Activated T-helper 1 cell treated with anti-CD3 and anti-CD28 coated beads, Interleukin-12 subunit alpha, Interleukin-12 subunit beta, Interleukin-2, Interleukin-4 antibody, amounts not matched to agents 30 ng/mL and 10 ng/mL and 1 ng/mL, durations not matched to agents 14 hours and 24 hours and 36 hours (primary cell): ENCODE measurements at regions of chr11 and their contacts with region 1.

Region 1: DNA sequence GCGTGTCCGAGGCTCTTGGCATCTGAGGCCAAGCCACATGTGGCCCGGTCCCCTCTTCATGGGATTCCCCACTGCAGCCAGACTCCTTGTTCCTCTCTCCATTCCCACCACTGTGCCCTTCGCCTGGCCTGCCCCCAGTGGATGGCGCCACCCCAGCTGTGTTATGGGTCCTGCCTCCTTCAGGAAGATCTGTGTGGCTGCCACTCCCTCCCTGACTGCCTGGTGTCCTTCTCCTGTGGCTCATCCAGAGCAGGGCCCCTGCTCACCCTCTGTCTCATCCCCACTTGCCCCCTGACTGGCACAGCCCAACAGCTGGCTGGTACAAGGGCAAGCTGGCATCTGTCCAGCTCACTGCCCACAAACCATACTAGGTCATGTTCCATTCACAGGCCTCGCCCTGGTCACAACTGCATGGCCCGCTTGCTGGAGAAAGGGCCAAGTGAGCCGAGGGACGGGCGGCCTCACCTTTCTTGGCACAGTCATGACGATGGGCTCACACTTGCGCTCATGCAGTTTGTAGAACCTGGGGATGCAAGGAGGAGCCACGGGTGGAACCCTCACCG is 1.9 kb upstream of the PTPRCAP start:
- DNase-seq: peak; percentile 24
- H3K4me3 Mint-ChIP-seq: peak overlapping the region; percentile 90
- H3K27ac Mint-ChIP-seq: peak overlapping the region; percentile 97
- H3K4me1 Mint-ChIP-seq: peaks cover 33% of the 10 kb centered on the region
- H3K27me3 Mint-ChIP-seq: no peaks in the 10 kb centered on the region

Region 2: GRCh38 chr11:67428052-67428914 is 11.1 kb before region 1 on chr11 and contains the start of gene RPS6KB2:
- intact Hi-C with region 1: loop called (anchors 1 kb)
- DNase-seq: peak; percentile 98
- H3K4me3 Mint-ChIP-seq: peak within 1 kb of the TSS; percentile 98
- H3K27ac Mint-ChIP-seq: peak within 1 kb of the TSS; percentile 97
- H3K4me1 Mint-ChIP-seq: peaks cover 27% of the 10 kb centered on the region
- H3K27me3 Mint-ChIP-seq: no peaks in the 10 kb centered on the region
- total RNA-seq, gene RPS6KB2: 84.1 and 86.2 TPM in 2 replicates

Region 3: GRCh38 chr11:67563354-67564114 is 124.1 kb after region 1 on chr11:
- intact Hi-C with region 1: no loop called
- DNase-seq: no peak
- H3K4me3 Mint-ChIP-seq: no peak overlapping the region
- H3K27ac Mint-ChIP-seq: no peak overlapping the region
- H3K4me1 Mint-ChIP-seq: peaks cover 9% of the 10 kb centered on the region
- H3K27me3 Mint-ChIP-seq: peaks cover 18% of the 10 kb centered on the region